Ascending aorta (tissue), 2 donors: ENCODE measurements at regions of chr22 and their contacts with region 1.

Region 1: DNA sequence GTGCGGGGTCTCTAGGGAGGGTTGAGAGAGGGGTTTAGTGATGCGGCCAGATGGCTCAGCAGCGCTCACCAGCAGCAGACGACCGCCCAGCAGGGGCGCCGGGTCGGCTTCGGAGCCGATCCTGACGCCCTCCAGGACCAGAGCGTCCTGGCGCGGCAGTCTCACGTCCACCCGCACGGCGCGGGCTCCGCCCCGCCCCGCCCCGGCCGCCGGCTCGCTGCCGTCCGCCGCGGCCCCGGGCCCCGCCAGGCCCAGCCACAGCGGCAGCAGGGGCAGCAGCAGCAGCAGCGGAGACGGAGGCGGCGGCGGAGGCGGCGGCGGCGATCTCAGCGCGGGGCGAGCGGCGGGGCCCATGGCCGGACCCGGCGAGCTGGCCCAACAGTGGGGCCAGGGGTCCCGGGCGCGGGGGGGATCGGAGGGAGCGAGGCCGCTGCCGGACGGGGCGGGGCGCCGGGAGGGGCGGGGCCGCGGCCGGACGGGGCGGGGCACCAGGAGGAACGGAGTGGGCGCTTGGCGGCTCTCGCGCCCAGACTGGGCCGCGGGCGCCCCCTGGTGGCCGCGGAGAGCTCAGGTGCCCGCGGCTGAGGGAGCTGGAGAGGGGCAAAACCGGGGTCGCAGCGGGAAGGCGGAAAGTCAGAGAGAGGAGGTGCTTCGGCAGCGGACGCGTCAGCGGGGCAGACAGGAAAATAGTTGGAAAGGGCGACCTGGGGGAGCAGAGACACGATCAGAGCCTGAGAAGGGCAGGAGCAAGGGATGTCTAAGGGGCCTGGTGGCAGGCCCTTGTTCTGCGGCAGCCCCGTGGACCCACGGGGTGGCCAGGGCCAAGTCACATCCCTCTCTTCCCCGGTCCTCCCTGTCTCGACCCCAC is at the start of gene RNF215:
- DNase-seq: peak in 1 of 2 donors; percentile 88
- H3K4me3 ChIP-seq: peak within 1 kb of the TSS; percentile 73 to 86
- H3K27ac ChIP-seq: peak within 1 kb of the TSS; percentile 59 to 70
- H3K4me1 ChIP-seq: peaks cover 8 to 11% of the 10 kb centered on the region in 2 donors
- H3K27me3 ChIP-seq: no peaks in the 10 kb centered on the region
- CTCF ChIP-seq: peak; percentile 75 to 95 (median 85)
- total RNA-seq, gene RNF215: 6.7 TPM

Region 2: DNA sequence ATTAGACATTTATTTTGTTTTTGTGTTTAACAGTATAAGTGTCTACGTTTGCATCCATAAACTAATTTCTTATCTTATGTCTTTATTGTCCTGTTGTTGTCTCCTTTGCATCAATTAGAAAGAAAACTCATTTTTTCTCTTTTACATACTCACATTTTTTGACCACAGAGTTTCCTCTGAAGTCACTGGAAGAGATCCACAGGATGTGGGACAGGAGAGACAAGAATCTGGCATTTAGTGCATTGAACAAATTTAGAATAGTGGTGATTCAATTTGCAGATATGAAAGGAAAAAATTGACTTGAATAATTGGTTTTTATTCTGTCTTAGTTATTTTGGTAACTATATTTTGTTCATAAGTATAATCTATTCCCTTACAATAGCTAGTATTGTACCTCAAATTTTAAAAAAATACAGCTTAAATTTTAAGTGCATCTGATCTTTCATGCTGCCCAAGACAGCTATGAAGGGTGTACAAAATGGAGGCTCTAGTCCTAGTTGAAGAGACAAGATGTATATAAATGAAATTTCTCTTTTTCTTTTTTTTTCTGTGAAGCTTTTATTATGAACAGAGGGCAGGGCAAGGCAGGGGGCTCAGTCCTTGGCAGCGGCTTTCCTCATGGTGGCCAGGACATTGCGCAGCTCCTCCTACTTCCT is 282.6 kb before region 1 on chr22:
- intact Hi-C with region 1: loop called (anchors 2 kb)
- DNase-seq: no peak
- H3K4me3 ChIP-seq: no peak overlapping the region
- H3K27ac ChIP-seq: no peak overlapping the region
- H3K4me1 ChIP-seq: no peaks in the 10 kb centered on the region
- H3K27me3 ChIP-seq: no peaks in the 10 kb centered on the region
- CTCF ChIP-seq: no peak

Region 3: GRCh38 chr22:30169002-30169401 is 218.2 kb before region 1 on chr22:
- intact Hi-C with region 1: no loop called
- DNase-seq: no peak
- H3K4me3 ChIP-seq: no peak overlapping the region
- H3K27ac ChIP-seq: no peak overlapping the region
- H3K4me1 ChIP-seq: no peaks in the 10 kb centered on the region
- H3K27me3 ChIP-seq: no peaks in the 10 kb centered on the region
- CTCF ChIP-seq: no peak

Region 4: DNA sequence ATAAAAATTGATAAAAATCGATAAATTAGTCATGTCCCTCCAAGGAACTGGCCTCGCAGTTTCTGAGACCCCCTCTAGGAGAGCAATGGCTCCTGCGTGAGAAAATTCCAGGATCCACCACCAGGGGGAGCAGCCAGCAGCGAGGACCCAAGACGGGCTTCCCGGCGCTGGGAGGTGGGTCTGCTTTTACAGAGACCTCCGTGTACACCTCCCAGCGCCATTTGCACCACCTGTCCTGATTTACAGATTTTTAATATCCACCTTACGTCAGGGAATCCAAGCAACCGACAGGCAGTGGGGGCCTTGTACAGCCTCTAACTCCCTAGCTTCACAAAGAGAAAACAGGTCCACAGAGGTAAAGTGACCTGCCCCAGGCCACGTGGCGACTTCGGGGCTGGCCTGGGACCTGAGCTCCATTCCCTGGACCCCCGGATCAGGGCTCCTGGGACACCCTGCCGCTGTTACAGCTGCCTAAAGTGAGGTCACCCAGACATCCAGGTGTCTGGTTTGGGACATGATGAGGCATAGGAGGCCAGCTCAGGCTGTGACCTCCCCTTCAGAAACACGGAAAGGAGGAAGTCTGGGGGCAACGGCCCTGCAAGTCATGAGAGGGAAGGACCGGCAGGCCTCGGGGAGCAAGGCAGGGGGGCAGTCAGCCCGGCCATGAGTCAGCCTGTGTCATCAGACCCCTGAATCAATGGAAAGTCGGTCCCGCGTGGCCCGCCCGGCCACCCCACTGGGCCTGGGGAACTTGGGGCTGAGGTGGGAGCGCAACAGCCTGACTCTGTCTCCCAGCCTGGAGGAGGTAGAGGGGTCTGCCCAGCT is 124.1 kb before region 1 on chr22:
- intact Hi-C with region 1: loop called (anchors 1 kb)
- DNase-seq: peak; percentile 61 to 87
- H3K4me3 ChIP-seq: peak overlapping the region in 1 of 2 donors; percentile 31
- H3K27ac ChIP-seq: no peak overlapping the region
- H3K4me1 ChIP-seq: no peaks in the 10 kb centered on the region
- H3K27me3 ChIP-seq: no peaks in the 10 kb centered on the region
- CTCF ChIP-seq: peak; percentile 96 to 98 (median 96)

Region 5: GRCh38 chr22:30326706-30327362 is 60.4 kb before region 1 on chr22 and contains the start of gene TBC1D10A:
- intact Hi-C with region 1: loop called (anchors 2 kb)
- DNase-seq: peak; percentile 80 to 95
- H3K4me3 ChIP-seq: peak within 1 kb of the TSS; percentile 95 to 100
- H3K27ac ChIP-seq: peak within 1 kb of the TSS; percentile 94 to 95
- H3K4me1 ChIP-seq: peaks cover 10 to 39% of the 10 kb centered on the region in 2 donors
- H3K27me3 ChIP-seq: no peaks in the 10 kb centered on the region
- CTCF ChIP-seq: no peak
- total RNA-seq, gene TBC1D10A: 107 TPM

Region 6: DNA sequence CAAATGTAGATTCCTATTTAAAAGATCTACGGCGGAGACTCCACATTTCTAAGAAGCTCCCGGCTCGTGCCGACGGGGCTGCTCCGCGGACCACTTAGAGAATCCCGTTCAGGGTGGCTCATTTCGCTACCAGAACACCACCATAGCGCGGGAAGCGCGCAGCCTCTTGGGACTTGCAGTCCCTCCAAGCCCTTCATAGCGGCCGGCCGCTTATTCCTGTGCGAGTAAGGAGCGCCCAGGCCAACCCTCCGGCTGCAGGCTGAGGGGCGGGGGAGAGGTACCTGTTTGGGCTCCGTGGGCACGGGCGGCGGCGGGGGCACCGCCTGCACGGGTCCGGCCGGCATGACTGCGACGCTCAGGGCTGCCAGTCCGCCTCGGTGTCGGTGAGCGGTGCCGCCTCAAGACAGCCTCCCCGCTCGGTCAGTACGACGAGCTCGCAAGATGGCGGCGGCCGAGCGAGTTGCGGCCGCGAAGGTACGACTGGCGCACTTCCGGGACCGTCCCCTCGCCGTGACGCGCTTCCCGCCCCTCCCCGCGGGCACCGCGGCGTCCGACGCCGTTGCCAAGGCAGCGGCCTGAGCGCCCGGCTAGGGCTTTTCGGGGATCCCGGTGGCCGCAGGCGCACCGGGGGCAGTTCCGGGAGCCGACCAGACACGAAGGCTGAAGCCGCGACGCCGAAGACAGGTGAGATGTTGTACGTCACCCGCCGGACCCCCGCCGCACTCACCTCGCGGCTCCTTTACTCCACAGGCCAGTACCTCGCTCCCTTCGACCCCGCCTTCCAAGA is 30.6 kb before region 1 on chr22 and contains the starts of genes CCDC157 and SF3A1:
- intact Hi-C with region 1: loop called (anchors 1 kb)
- DNase-seq: peak; percentile 39 to 92
- H3K4me3 ChIP-seq: peak within 1 kb of the TSS; percentile 75 to 97
- H3K27ac ChIP-seq: peak within 1 kb of the TSS; percentile 92 to 99
- H3K4me1 ChIP-seq: peaks cover 11 to 24% of the 10 kb centered on the region in 2 donors
- H3K27me3 ChIP-seq: no peaks in the 10 kb centered on the region
- CTCF ChIP-seq: no peak
- total RNA-seq, gene CCDC157: 7.0 TPM
- total RNA-seq, gene SF3A1: 92.9 TPM

Region 7: DNA sequence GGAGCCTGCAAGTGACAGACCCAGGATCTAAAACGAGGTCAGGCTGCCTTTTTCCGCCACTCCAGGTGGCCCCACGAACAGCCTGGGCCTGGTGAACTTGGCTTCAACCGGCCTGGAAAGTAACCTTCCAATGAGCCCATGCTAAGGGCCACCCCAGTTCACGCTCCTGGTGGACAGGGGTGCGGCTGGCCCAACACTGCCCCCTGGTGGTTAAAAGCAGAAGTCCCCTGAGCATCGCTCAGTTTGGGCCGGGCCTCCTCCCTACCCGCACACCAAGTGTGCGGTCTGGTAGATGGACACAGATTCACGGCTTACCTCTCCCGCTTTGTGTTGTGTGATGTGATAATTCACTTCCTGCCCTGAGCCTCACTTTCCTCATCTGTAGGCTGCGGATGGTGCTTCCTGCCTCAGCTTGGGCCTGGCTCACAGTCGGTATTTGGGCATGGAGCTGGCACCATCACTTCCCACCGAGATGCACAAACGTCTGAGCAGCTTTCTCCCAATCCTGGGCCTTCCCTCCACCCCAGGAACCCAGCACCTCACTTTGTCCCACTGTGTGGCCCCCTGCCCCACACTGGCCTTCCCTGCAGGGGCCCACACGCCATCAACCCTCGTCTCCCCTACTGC is 98.3 kb after region 1 on chr22:
- intact Hi-C with region 1: loop called (anchors 2 kb)
- DNase-seq: peak in 1 of 2 donors; percentile 72
- H3K4me3 ChIP-seq: no peak overlapping the region
- H3K27ac ChIP-seq: no peak overlapping the region
- H3K4me1 ChIP-seq: no peaks in the 10 kb centered on the region
- H3K27me3 ChIP-seq: no peaks in the 10 kb centered on the region
- CTCF ChIP-seq: peak; percentile 85 to 88 (median 88)